Heart right ventricle (tissue), 16 donors: ENCODE measurements at regions of chr5 and their contacts with region 1.

Region 1: DNA sequence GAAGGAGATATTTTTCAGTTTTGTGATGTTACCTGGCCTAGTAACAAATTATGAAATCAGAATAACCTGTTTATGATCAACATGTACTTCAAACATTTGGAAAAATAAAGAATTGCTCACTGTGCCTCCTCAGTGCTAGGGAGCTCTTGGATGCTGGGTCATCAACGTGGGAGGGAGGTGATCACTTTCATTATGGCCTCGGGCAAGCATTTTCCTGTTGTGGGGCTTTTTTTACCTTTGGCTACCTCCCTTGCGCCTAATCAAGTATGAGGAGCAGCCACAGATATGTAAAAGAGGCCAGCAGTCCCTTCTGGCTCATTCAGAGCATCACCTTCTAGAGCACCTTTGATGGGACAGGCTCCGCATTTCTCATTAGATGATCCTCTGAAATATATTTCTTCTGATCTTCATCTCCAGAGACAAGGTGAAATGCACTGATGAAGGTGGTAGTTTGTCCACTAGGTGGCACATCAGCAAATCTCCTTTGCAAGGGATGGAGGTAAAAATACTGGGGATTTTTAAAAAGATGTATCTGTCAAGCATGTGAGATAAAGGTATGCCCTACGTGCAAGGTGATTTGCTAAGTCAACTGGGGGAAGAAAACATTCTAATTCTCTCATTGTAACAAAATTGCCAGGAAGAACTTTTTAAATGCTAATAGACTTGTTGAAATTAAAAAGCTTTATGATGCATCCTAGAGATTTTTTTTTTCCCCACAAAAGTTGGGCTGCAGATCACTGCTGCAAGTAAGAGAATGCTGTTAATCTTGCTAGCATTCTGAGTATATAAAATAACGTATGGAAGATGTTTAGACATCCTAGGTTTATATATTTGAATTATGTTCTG is 218.2 kb downstream of the MAST4 start:
- DNase-seq: peak in 1 of 2 donors; percentile 51
- ATAC-seq: peak in 1 of 8 donors; percentile 30
- H3K4me3 ChIP-seq: no peak overlapping the region
- H3K27ac ChIP-seq: no peak overlapping the region
- H3K4me1 ChIP-seq: peaks cover 0 to 16% (median 8%) of the 10 kb centered on the region in 9 donors
- H3K27me3 ChIP-seq: no peaks in the 10 kb centered on the region
- CTCF ChIP-seq: peak; percentile 40 to 83 (median 78)

Region 2: GRCh38 chr5:65883461-65883860 is 930.9 kb before region 1 on chr5:
- intact Hi-C with region 1: no loop called
- DNase-seq: no peak
- ATAC-seq: no peak
- H3K4me3 ChIP-seq: no peak overlapping the region
- H3K27ac ChIP-seq: no peak overlapping the region
- H3K4me1 ChIP-seq: no peaks in the 10 kb centered on the region
- H3K27me3 ChIP-seq: no peaks in the 10 kb centered on the region
- CTCF ChIP-seq: no peak

Region 3: DNA sequence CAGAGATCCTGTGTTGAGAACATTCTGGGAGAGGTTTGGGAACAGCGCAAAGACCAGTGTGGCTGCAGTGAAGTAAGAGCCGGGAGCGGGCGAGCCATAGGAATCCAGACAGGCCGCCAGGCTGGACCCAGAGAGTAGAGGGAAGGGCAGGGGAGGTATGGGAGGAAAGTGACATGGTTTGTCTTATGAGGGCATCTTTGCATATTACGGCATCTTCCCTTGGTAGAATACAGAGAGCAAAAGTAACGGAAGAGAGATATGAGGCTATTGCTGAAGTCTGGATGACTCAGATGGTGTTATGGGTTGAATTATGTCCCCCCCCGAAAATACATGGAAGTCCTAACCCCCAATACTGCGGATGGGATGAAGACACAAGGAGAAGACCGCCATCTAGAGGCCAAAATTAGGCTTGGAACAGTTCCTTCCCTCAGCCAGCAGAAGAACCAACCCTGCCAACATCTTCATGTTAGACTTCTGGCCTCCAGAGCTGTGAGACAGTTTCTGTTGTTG is 50.0 kb after region 1 on chr5:
- intact Hi-C with region 1: loop called in 8 of 10 experiments (anchors 2 to 10 kb)
- DNase-seq: peak in 1 of 2 donors; percentile 25
- ATAC-seq: peak; percentile 21 to 72 (median 42)
- H3K4me3 ChIP-seq: no peak overlapping the region
- H3K27ac ChIP-seq: no peak overlapping the region
- H3K4me1 ChIP-seq: peaks cover 0 to 61% (median 17%) of the 10 kb centered on the region in 9 donors
- H3K27me3 ChIP-seq: peaks cover 0 to 9% (median 0%) of the 10 kb centered on the region in 7 donors
- CTCF ChIP-seq: peak in 7 of 9 donors; percentile 17 to 62 (median 53)

Region 4: DNA sequence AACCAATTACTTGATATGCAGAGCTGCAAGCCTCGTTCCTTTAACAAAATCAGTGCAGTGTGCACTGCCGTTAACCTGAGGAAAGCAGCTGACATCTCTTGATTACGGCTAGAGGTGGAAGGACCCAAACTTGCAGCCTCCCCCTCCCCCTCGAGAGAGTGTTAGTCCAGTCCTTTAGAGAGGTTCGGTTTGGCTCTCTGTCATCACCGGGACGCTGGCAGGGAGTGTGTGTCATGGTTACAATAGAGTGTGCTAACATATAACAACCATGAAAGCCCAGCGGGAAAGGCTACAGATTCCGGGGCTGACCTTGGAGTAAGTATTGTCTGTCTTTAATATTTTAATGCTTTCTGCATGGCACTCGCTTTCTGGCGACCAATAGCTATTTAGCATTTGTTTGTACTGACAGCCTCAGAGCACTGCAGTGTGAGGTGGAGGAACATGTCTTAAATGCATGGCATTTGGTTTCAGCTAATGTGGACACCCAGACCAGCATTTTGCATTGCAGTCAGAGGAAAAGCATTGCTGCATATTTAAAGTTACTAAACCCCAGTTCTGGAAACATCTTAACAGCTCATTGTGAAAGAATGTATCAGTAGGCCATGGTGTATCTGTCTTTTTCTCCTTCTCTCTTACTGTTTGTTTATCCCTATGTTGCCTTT is 144.7 kb after region 1 on chr5:
- intact Hi-C with region 1: loop called in 2 of 10 experiments (anchors 10 kb)
- DNase-seq: peak; percentile 39 to 49
- ATAC-seq: peak; percentile 47 to 79 (median 70)
- H3K4me3 ChIP-seq: peak overlapping the region; percentile 0 to 56 (median 47)
- H3K27ac ChIP-seq: peak overlapping the region; percentile 16 to 80 (median 64)
- H3K4me1 ChIP-seq: peaks cover 0 to 59% (median 38%) of the 10 kb centered on the region in 9 donors
- H3K27me3 ChIP-seq: no peaks in the 10 kb centered on the region
- CTCF ChIP-seq: no peak

Region 5: GRCh38 chr5:66969961-66970360 is 155.6 kb after region 1 on chr5:
- intact Hi-C with region 1: loop called in 2 of 10 experiments (anchors 10 kb)
- DNase-seq: peak in 1 of 2 donors; percentile 20
- ATAC-seq: peak in 6 of 8 donors; percentile 21 to 72 (median 54)
- H3K4me3 ChIP-seq: no peak overlapping the region
- H3K27ac ChIP-seq: no peak overlapping the region
- H3K4me1 ChIP-seq: peaks cover 0 to 39% (median 5%) of the 10 kb centered on the region in 9 donors
- H3K27me3 ChIP-seq: no peaks in the 10 kb centered on the region
- CTCF ChIP-seq: no peak

Region 6: GRCh38 chr5:67149951-67150523 is 335.7 kb after region 1 on chr5:
- intact Hi-C with region 1: loop called in 3 of 10 experiments (anchors 5 to 10 kb)
- DNase-seq: no peak
- ATAC-seq: peak in 1 of 8 donors; percentile 71
- H3K4me3 ChIP-seq: peak overlapping the region in 7 of 10 donors; percentile 10 to 38 (median 26)
- H3K27ac ChIP-seq: peak overlapping the region in 1 of 10 donors; percentile 21
- H3K4me1 ChIP-seq: peaks cover 0 to 11% (median 6%) of the 10 kb centered on the region in 9 donors
- H3K27me3 ChIP-seq: no peaks in the 10 kb centered on the region
- CTCF ChIP-seq: peak in 8 of 9 donors; percentile 17 to 60 (median 49)